ENCODE measurements at regions of chr6 and their contacts with region 1.

Region 1: DNA sequence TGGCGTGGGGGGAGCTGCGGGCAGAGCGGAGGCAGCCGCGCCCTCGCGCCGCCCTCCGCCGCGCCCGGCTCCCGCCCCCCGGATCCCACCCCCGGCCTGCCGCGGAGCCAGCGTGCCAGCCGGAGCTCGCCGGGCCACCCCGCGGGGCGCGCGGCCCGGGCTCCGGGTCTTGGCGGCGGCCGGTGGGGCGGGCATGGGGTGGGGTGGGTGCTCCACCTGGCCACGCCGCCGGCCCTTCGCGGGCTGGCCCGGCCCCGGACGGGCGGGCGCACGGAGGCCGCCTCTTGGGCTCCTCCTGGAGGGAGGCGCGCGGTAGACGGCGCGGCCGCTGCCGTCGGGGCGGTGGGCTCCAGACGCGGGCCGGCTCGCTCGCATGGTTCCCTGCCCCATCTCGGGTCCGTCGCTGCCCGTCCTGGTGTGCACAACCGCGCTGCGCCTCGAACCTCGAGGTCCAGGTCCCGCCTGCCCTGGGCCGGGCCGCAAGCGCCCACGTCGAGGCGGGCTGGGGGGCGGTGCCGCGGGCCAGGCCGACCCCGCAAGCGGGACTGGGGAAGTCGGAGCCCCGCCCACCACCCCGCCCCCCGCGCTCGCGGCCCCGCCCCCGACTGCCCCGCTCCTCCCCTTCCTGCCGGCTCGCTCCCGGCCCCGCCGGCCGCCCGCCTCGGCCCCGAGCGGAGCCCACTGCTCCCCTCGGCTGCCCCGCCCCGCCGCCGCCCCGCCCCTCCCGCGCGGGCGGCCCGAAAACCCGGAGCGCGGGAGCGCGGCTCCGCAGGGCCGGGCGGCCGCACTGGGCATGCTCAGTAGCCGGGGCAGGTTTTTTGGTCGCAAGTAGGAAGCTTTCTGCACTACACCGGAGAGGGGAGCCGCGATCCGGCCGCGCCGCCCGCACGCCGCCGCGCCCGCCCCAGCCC is at the start of gene CDYL:
- DNase-seq: peak; percentile 84
- H3K4me3 ChIP-seq: peak within 1 kb of the TSS; percentile 66 to 75 (median 69)
- H3K27ac ChIP-seq: peak within 1 kb of the TSS; percentile 67
- H3K4me1 ChIP-seq: peaks cover 11% of the 10 kb centered on the region
- H3K27me3 ChIP-seq: no peaks in the 10 kb centered on the region
- CTCF ChIP-seq: peak in 1 of 2 donors; percentile 44
- total RNA-seq, gene CDYL: 47.7 to 49.7 TPM

Region 2: DNA sequence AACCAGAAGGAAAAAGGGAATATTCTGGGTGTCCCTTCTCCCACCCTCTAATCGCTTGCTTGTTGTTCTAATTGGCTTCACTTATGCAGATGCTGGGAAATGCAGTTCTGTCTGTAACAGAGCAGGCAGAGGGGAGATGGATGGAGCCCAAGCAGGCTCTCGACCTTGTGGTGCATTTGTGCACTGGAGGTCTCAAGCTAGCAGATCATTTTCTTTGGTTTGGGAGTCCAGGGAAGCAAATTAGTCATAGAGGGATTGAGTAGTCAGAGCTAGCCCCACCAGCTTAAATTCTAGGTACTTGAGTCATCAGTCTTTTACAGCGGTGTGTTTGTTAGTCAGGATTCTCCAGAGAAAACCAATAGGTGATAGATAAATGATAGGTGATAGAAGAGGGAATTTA is 405.8 kb before region 1 on chr6:
- CTCF ChIA-PET with region 1: no interaction called
- dilution Hi-C with region 1: no loop called
- in situ Hi-C with region 1: no loop called
- intact Hi-C with region 1: loop called (anchors 5 kb)
- DNase-seq: peak; percentile 82
- H3K4me3 ChIP-seq: no peak overlapping the region
- H3K27ac ChIP-seq: no peak overlapping the region
- H3K4me1 ChIP-seq: peaks cover 24% of the 10 kb centered on the region
- H3K27me3 ChIP-seq: no peaks in the 10 kb centered on the region
- CTCF ChIP-seq: no peak

Region 3: GRCh38 chr6:4599923-4600322 is 175.9 kb before region 1 on chr6:
- CTCF ChIA-PET with region 1: no interaction called
- dilution Hi-C with region 1: no loop called
- in situ Hi-C with region 1: no loop called
- intact Hi-C with region 1: loop called (anchors 2 kb)
- DNase-seq: peak; percentile 97
- H3K4me3 ChIP-seq: no peak overlapping the region
- H3K27ac ChIP-seq: peak overlapping the region; percentile 94
- H3K4me1 ChIP-seq: peaks cover 38% of the 10 kb centered on the region
- H3K27me3 ChIP-seq: no peaks in the 10 kb centered on the region
- CTCF ChIP-seq: no peak

Region 4: DNA sequence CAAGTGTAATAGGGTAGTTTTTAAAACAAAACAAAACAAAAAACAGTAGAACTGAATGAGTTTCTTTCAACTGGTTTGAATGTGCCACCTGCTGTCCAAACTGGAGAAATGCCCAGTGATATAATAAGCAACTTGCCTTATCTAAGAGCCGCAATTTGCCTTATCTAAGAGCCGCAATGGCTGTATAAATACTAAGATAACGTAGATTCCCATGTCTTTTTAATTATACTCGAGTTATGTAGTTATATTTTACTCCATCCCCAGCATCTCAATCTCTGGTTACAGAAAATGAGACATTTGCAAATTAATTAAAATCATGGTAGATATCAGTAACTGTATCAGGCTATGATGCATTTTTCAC is 160.8 kb after region 1 on chr6:
- CTCF ChIA-PET with region 1: interaction called, 3 read pairs
- dilution Hi-C with region 1: no loop called
- in situ Hi-C with region 1: no loop called
- intact Hi-C with region 1: loop called (anchors 2 kb)
- DNase-seq: no peak
- H3K4me3 ChIP-seq: no peak overlapping the region
- H3K27ac ChIP-seq: no peak overlapping the region
- H3K4me1 ChIP-seq: peaks cover 19% of the 10 kb centered on the region
- H3K27me3 ChIP-seq: no peaks in the 10 kb centered on the region
- CTCF ChIP-seq: peak; percentile 48 to 57

Region 5: GRCh38 chr6:5606546-5606945 is 830.7 kb after region 1 on chr6:
- CTCF ChIA-PET with region 1: no interaction called
- dilution Hi-C with region 1: no loop called
- in situ Hi-C with region 1: no loop called
- intact Hi-C with region 1: no loop called
- DNase-seq: no peak
- H3K4me3 ChIP-seq: no peak overlapping the region
- H3K27ac ChIP-seq: no peak overlapping the region
- H3K4me1 ChIP-seq: no peaks in the 10 kb centered on the region
- H3K27me3 ChIP-seq: no peaks in the 10 kb centered on the region
- CTCF ChIP-seq: no peak

Measured in mammary epithelial cell (primary cell).